HCT116 (cell line): ENCODE measurements at regions of chr6 and their contacts with region 1.

Region 1: GRCh38 chr6:55293116-55293515 is 34.2 kb upstream of the GFRAL start:
- DNase-seq: peak; percentile 18
- ATAC-seq: peak; percentile 46; the same call in 1 of the 2 replicates
- H3K4me3 ChIP-seq: no peak overlapping the region
- H3K27ac ChIP-seq: no peak overlapping the region
- H3K4me1 ChIP-seq: no peaks in the 10 kb centered on the region
- H3K27me3 ChIP-seq: no peaks in the 10 kb centered on the region
- CTCF ChIP-seq: peak; percentile 28 to 70 (median 58); a peak in 4 of 6 replicates
- POLR2A ChIP-seq: no peak
- RAD21 ChIP-seq: peak; percentile 32; the same call in 1 of the 2 replicates

Region 2: GRCh38 chr6:55058701-55059100 is 234.4 kb before region 1 on chr6:
- CTCF ChIA-PET with region 1: no interaction called
- POLR2A ChIA-PET with region 1: no interaction called
- RAD21 ChIA-PET with region 1: no interaction called
- intact Hi-C with region 1: no loop called
- DNase-seq: no peak
- ATAC-seq: no peak
- H3K4me3 ChIP-seq: no peak overlapping the region
- H3K27ac ChIP-seq: no peak overlapping the region
- H3K4me1 ChIP-seq: no peaks in the 10 kb centered on the region
- H3K27me3 ChIP-seq: no peaks in the 10 kb centered on the region
- CTCF ChIP-seq: no peak
- POLR2A ChIP-seq: no peak
- RAD21 ChIP-seq: no peak

Region 3: DNA sequence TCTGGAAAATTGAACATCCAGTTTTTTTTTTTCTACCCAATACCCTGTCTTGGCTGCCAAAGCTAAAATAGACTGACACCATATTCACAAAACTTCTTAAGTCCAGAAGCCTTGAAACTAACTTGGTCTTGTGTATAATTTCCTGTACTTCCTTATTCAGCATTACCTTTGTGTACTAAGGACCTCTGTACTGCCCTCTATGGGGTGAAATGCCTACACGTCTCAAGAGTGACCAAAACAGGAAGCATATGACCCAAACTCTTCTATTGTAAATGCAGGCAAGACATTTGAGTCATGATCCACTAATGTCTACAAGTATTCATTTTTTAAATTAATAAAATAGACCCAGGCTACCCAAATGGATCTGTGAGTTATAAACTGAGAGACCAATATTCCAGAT is 235.5 kb after region 1 on chr6:
- CTCF ChIA-PET with region 1: no interaction called
- POLR2A ChIA-PET with region 1: no interaction called
- RAD21 ChIA-PET with region 1: no interaction called
- intact Hi-C with region 1: no loop called
- DNase-seq: peak; percentile 51
- ATAC-seq: peak; percentile 98
- H3K4me3 ChIP-seq: no peak overlapping the region
- H3K27ac ChIP-seq: no peak overlapping the region
- H3K4me1 ChIP-seq: no peaks in the 10 kb centered on the region
- H3K27me3 ChIP-seq: no peaks in the 10 kb centered on the region
- CTCF ChIP-seq: peak; percentile 21 to 66 (median 65); a peak in 5 of 6 replicates
- POLR2A ChIP-seq: no peak
- RAD21 ChIP-seq: peak; percentile 20; the same call in 1 of the 2 replicates

Region 4: GRCh38 chr6:55953335-55953734 is 660.2 kb after region 1 on chr6:
- CTCF ChIA-PET with region 1: no interaction called
- POLR2A ChIA-PET with region 1: no interaction called
- RAD21 ChIA-PET with region 1: no interaction called
- intact Hi-C with region 1: loop called (anchors 5 kb)
- DNase-seq: peak; percentile 15
- ATAC-seq: peak; percentile 47; the same call in 1 of the 2 replicates
- H3K4me3 ChIP-seq: no peak overlapping the region
- H3K27ac ChIP-seq: no peak overlapping the region
- H3K4me1 ChIP-seq: no peaks in the 10 kb centered on the region
- H3K27me3 ChIP-seq: no peaks in the 10 kb centered on the region
- CTCF ChIP-seq: peak; percentile 13 to 42 (median 35); a peak in 4 of 6 replicates
- POLR2A ChIP-seq: no peak
- RAD21 ChIP-seq: peak; percentile 69